ENCODE measurements at regions of chr11 and their contacts with region 1.

Region 1: DNA sequence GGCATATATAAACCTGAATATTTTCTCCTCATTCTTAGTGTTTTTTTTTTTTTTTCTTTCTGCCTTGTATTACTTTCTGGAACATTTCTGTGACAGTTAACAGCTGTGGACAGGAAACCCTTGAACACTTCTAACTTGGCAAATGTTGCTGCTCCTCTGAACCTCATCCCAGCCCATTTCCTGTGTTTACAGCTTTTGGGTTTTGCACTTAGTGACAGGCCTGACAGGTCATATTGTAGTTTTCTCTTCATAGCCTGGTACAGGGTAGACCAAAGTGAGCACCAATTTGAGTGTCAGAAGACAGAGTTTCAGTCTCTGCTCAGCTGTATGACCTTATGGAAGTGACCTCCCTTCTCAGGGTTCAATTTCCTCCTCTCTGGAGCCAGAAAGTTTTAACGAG is 91.6 kb downstream of the STIM1 start:
- DNase-seq: peak; percentile 88
- ATAC-seq: peak; percentile 80
- H3K4me3 Mint-ChIP-seq: peak overlapping the region; percentile 70
- H3K27ac Mint-ChIP-seq: peak overlapping the region; percentile 98
- H3K4me1 Mint-ChIP-seq: peaks cover 94% of the 10 kb centered on the region
- H3K27me3 Mint-ChIP-seq: no peaks in the 10 kb centered on the region

Region 2: GRCh38 chr11:3735827-3736226 is 211.2 kb before region 1 on chr11:
- CTCF ChIA-PET with region 1: no interaction called
- DNase-seq: no peak
- ATAC-seq: no peak
- H3K4me3 Mint-ChIP-seq: no peak overlapping the region
- H3K27ac Mint-ChIP-seq: no peak overlapping the region
- H3K4me1 Mint-ChIP-seq: peaks cover 2% of the 10 kb centered on the region
- H3K27me3 Mint-ChIP-seq: no peaks in the 10 kb centered on the region

Region 3: GRCh38 chr11:3959015-3959919 is 12.2 kb after region 1 on chr11:
- CTCF ChIA-PET with region 1: interaction called, 11 read pairs
- DNase-seq: no peak
- ATAC-seq: peak; percentile 58
- H3K4me3 Mint-ChIP-seq: no peak overlapping the region
- H3K27ac Mint-ChIP-seq: peak overlapping the region; percentile 12
- H3K4me1 Mint-ChIP-seq: peaks cover 64% of the 10 kb centered on the region
- H3K27me3 Mint-ChIP-seq: no peaks in the 10 kb centered on the region

Region 4: GRCh38 chr11:3971756-3972404 is 24.8 kb after region 1 on chr11:
- CTCF ChIA-PET with region 1: interaction called, 10 read pairs
- DNase-seq: no peak
- ATAC-seq: no peak
- H3K4me3 Mint-ChIP-seq: no peak overlapping the region
- H3K27ac Mint-ChIP-seq: no peak overlapping the region
- H3K4me1 Mint-ChIP-seq: peaks cover 52% of the 10 kb centered on the region
- H3K27me3 Mint-ChIP-seq: no peaks in the 10 kb centered on the region

Measured in activated CD8-positive, alpha-beta memory T cell treated with anti-CD3 and anti-CD28 coated beads, Interleukin-2, amount 10 ng/mL, durations not matched to agents 7 days and 5 days (primary cell).